PC-3 (cell line): ENCODE measurements at regions of chr3 and their contacts with region 1.

Region 1: GRCh38 chr3:160319322-160319721 is 79.7 kb downstream of the IFT80 start:
- DNase-seq: peak; percentile 27
- ATAC-seq: peak; percentile 94
- H3K4me3 ChIP-seq: no peak overlapping the region
- H3K27ac ChIP-seq: no peak overlapping the region
- H3K4me1 ChIP-seq: peaks cover 6% of the 10 kb centered on the region; the same call in 1 of the 2 replicates
- H3K27me3 ChIP-seq: no peaks in the 10 kb centered on the region
- CTCF ChIP-seq: no peak

Region 2: GRCh38 chr3:159898147-159898546 is 421.2 kb before region 1 on chr3:
- CTCF ChIA-PET with region 1: interaction called, 12 read pairs
- POLR2A ChIA-PET with region 1: no interaction called
- intact Hi-C with region 1: no loop called
- DNase-seq: no peak
- ATAC-seq: no peak
- H3K4me3 ChIP-seq: no peak overlapping the region
- H3K27ac ChIP-seq: no peak overlapping the region
- H3K4me1 ChIP-seq: no peaks in the 10 kb centered on the region
- H3K27me3 ChIP-seq: no peaks in the 10 kb centered on the region
- CTCF ChIP-seq: no peak

Region 3: GRCh38 chr3:160133757-160134156 is 185.6 kb before region 1 on chr3:
- CTCF ChIA-PET with region 1: no interaction called
- POLR2A ChIA-PET with region 1: no interaction called
- intact Hi-C with region 1: no loop called
- DNase-seq: peak; percentile 62
- ATAC-seq: no peak; the same call in 1 of the 2 replicates
- H3K4me3 ChIP-seq: no peak overlapping the region
- H3K27ac ChIP-seq: peak overlapping the region; percentile 4
- H3K4me1 ChIP-seq: peaks cover 24% of the 10 kb centered on the region
- H3K27me3 ChIP-seq: no peaks in the 10 kb centered on the region
- CTCF ChIP-seq: peak; percentile 50

Region 4: DNA sequence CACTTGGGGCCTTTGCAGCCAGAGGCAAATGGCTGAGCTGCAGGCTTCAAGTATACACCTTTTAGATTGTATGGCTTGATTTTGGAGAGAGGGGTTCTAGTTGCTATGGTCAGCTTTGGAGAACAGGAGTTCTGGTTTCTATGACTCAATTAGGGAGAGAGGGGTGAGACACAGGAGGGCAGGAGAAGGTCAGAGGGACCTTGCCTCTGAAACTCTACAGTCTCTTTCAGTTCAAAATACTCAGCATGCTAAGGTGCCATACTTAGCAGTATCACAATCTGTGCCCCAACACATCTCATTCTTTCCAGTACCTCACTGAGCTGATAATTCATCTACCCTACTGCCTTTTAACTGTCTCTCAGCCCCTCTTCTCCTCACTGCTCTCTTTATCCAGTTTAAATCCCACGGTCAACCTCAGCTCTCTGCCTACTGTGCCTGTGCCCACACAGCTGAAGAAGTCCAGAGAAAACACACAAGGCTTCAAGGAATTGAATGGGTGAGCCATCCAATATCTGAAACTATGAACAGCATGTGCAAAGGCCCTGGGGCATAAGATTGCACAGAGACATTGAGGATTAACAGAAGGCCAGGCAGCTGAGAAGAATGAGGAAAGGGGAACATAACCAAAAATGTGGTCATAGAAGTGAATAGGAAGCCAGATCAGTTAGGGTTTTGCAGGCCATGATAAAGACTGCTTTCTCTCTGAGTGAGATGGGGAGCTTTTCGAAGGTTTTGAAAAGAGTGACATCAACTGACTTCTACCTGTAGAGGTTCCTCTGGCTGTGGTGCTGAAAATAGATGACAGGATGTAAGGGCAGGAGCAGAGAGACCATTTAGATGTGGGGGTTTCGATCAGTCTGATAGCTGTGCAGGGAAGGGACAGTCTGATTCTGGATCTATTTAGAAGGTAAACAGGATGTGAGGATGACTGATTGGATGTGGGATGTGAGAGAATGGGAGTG is 148.6 kb before region 1 on chr3:
- CTCF ChIA-PET with region 1: no interaction called
- POLR2A ChIA-PET with region 1: no interaction called
- intact Hi-C with region 1: no loop called
- DNase-seq: no peak
- ATAC-seq: no peak
- H3K4me3 ChIP-seq: no peak overlapping the region
- H3K27ac ChIP-seq: no peak overlapping the region
- H3K4me1 ChIP-seq: peaks cover 14% of the 10 kb centered on the region
- H3K27me3 ChIP-seq: no peaks in the 10 kb centered on the region
- CTCF ChIP-seq: no peak

Region 5: DNA sequence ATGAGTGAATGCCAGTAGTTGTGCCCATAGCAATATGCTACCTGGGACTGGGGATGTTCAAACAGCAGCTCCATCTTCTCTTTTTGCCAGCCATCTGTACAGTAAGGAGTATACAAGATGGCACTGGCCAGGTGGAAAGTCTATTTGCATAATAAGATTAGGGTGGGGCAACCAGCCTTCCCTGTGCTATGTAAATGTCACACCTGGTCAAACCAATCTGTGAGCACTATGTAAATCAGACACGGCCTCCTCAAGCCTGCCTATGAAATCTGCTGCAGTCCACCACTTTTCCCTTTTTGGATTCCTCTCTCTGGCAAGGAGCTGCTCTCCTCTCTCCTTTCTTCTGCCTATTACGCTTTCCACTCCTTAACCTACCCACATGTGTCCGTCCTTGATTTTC is 41.1 kb before region 1 on chr3:
- CTCF ChIA-PET with region 1: no interaction called
- POLR2A ChIA-PET with region 1: no interaction called
- intact Hi-C with region 1: no loop called
- DNase-seq: no peak
- ATAC-seq: no peak
- H3K4me3 ChIP-seq: no peak overlapping the region
- H3K27ac ChIP-seq: no peak overlapping the region
- H3K4me1 ChIP-seq: no peaks in the 10 kb centered on the region
- H3K27me3 ChIP-seq: no peaks in the 10 kb centered on the region
- CTCF ChIP-seq: no peak

Region 6: DNA sequence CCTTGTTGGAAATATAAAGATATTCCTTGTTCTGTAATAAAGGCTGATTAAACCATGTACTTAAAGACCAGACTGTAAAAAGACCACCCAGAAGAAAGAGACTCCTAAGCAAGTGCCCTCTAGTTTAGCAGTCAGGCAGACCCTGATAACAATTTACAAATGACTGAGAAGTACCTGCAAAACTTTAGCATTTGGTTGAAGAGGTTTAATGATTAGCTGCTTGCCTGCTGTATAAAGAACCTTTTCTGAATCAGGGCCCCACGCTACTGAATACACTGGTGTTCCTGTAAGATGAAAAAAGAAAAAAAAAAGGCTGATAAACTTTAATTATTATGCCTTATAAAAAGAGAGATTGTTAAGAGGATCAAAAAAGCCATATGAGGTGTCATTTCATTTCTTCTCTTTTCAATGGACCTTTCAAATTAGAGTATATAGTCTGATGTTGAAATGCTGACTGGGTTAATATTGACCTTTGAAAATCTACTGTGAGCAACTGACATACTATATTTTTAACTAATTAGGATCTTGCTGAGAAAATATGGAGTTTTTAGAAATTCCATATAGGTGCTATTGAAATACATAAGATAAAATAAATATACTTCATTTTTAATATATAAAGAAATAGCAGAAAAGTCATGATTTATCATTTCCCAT is 46.7 kb after region 1 on chr3:
- CTCF ChIA-PET with region 1: no interaction called
- POLR2A ChIA-PET with region 1: no interaction called
- intact Hi-C with region 1: no loop called
- DNase-seq: no peak
- ATAC-seq: no peak
- H3K4me3 ChIP-seq: no peak overlapping the region
- H3K27ac ChIP-seq: no peak overlapping the region
- H3K4me1 ChIP-seq: no peaks in the 10 kb centered on the region
- H3K27me3 ChIP-seq: no peaks in the 10 kb centered on the region
- CTCF ChIP-seq: no peak